ENCODE measurements at regions of chr3 and their contacts with region 1.

Region 1: GRCh38 chr3:128617557-128618397 is 32.8 kb downstream of the RPN1 start:
- DNase-seq: peak; percentile 99
- H3K4me3 ChIP-seq: peak overlapping the region; percentile 78 to 90 (median 84)
- H3K27ac ChIP-seq: peak overlapping the region; percentile 84 to 93 (median 90)
- H3K4me1 ChIP-seq: peaks cover 0 to 21% (median 18%) of the 10 kb centered on the region in 4 donors
- H3K27me3 ChIP-seq: no peaks in the 10 kb centered on the region
- CTCF ChIP-seq: peak; percentile 87 to 95 (median 92)
- EP300 ChIP-seq: peak in 1 of 4 donors; percentile 68
- POLR2A ChIP-seq: no peak

Region 2: GRCh38 chr3:128369864-128370642 is 247.7 kb before region 1 on chr3:
- intact Hi-C with region 1: no loop called
- DNase-seq: no peak
- H3K4me3 ChIP-seq: no peak overlapping the region
- H3K27ac ChIP-seq: no peak overlapping the region
- H3K4me1 ChIP-seq: peaks cover 0 to 17% (median 4%) of the 10 kb centered on the region in 4 donors
- H3K27me3 ChIP-seq: no peaks in the 10 kb centered on the region
- CTCF ChIP-seq: no peak
- EP300 ChIP-seq: no peak
- POLR2A ChIP-seq: no peak

Region 3: DNA sequence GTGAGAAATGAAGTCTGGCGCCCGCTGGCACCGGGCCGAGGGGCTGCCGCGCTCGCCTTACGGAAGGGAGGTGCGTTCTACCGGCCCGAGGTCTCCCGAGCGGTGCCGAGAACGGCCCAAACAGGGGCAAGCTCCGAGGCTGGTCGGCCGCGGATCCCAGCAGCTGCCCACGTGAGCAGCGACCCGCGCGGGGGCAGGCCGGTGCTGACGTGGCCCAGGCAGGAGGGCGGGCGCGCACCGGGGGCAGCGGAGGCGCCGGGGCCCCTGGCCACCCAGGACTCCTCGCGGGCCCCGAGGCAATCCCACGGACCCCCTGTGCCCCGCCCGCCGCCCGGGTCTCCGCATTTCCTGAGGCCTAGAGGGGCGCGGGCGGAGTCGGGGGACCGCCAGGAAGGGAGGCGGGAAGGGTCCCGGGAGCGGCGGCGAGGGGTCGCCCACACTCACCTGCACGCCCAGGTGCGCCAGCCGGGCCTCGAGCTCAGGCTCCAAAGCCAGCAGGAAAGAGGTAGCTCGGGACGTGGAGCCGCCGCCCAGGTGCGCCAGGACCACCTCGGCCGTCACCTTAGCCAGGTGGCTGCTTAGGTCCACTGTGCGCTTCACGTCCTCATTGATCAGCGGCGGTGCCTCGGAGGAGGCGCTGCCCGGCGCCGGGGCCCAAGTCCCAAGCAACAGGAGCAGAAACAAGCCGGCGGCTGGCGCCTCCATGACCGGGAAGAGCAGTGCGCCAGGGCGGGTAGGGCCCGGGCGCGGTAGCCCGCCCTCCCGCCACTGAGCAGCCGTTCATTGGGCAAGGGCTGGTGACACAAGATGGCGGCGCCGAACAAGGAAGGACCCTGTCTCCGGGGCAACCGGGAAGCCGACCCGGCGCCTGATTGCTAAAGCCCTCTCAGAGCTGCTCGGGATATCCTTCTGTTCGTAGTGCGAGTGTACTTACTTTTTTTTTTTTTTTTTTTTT is 32.6 kb after region 1 on chr3 and contains the start of gene RPN1:
- intact Hi-C with region 1: loop called (anchors 1 kb)
- DNase-seq: peak; percentile 99
- H3K4me3 ChIP-seq: peak within 1 kb of the TSS; percentile 94 to 100 (median 97)
- H3K27ac ChIP-seq: peak within 1 kb of the TSS; percentile 96 to 100 (median 100)
- H3K4me1 ChIP-seq: peaks cover 0 to 23% (median 17%) of the 10 kb centered on the region in 4 donors
- H3K27me3 ChIP-seq: no peaks in the 10 kb centered on the region
- CTCF ChIP-seq: no peak
- EP300 ChIP-seq: no peak
- POLR2A ChIP-seq: peak; percentile 69 to 72
- total RNA-seq, gene RPN1: 115 to 158 (median 143) TPM

Region 4: DNA sequence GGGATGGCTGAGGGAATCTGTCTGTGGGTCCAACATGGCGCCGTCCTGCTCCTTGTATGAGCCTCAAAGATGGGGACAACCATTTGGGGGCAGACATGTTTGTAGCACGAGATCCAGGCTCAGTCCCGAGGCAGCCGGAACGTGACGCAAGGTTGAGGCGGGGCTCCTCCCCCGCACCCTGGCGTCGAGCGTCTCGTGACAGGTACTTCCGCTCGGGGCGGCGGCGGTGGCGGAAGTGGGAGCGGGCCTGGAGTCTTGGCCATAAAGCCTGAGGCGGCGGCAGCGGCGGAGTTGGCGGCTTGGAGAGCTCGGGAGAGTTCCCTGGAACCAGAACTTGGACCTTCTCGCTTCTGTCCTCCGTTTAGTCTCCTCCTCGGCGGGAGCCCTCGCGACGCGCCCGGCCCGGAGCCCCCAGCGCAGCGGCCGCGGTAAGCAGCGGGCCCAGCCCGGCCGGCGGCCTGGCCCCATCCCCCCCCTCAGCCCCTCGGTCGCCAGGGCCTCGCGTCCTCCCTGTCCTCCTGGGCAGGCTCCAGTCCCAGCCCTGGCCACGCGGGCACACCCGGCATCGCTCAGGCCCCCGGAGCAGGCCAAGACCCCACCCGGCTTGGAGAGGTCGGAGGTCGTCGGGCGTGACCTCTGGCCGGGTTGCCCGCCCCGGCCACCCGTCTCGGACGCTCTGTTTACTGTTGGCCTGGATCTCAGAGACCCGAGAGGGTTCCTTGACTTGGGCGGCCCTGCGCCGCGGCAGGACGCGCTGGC is 108.3 kb after region 1 on chr3 and contains the start of gene RAB7A:
- intact Hi-C with region 1: loop called (anchors 5 kb)
- DNase-seq: peak; percentile 99
- H3K4me3 ChIP-seq: peak within 1 kb of the TSS; percentile 80 to 99 (median 94)
- H3K27ac ChIP-seq: peak within 1 kb of the TSS; percentile 93 to 99 (median 98)
- H3K4me1 ChIP-seq: peaks cover 0 to 43% (median 38%) of the 10 kb centered on the region in 4 donors
- H3K27me3 ChIP-seq: no peaks in the 10 kb centered on the region
- CTCF ChIP-seq: no peak
- EP300 ChIP-seq: peak; percentile 43 to 99 (median 81)
- POLR2A ChIP-seq: peak; percentile 87 to 95
- total RNA-seq, gene RAB7A: 73.6 to 100.0 (median 86.8) TPM

Region 5: DNA sequence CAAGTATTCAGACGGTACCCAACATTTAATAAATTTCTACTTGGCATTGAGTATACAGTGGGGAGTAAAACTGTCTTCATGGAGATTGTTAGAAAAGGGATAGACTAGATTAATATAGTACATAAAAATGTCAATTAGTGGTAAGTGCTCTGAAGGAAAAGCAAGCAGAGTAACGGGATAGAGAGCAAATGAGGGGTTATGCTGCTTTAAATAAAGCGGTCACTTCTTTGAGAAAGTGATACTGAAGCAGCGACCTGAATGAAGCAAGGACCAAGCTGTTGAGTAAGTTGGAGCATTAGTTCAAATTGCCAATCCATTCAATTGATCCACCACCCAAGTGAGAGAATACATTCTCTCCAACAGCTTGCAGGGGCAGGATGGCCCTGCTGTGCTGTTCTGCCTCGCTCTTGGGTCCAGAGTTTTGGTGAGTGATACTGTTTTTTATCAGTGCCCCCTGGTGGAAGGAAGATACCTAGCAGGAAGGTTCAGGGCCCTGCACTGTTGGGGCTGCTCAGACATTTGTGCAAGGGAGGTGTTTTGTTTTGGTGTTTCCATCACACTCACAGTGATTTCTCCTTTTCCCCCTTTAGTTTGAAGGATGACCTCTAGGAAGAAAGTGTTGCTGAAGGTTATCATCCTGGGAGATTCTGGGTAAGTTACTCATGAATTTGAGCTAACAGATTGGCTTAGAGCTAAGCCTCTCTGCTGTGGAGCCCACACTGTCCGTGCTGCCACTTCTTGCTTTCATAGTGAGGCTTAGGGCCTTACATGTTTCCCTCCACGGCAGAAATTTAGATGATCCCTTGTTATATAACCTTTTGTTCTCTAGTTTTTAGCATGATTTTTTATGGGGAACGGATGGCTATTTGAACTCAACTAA is 177.2 kb after region 1 on chr3:
- intact Hi-C with region 1: loop called (anchors 1 kb)
- DNase-seq: peak; percentile 71
- H3K4me3 ChIP-seq: no peak overlapping the region
- H3K27ac ChIP-seq: peak overlapping the region; percentile 29 to 63 (median 50)
- H3K4me1 ChIP-seq: peaks cover 0 to 29% (median 23%) of the 10 kb centered on the region in 4 donors
- H3K27me3 ChIP-seq: no peaks in the 10 kb centered on the region
- CTCF ChIP-seq: peak; percentile 59 to 86 (median 81)
- EP300 ChIP-seq: no peak
- POLR2A ChIP-seq: no peak

Region 6: DNA sequence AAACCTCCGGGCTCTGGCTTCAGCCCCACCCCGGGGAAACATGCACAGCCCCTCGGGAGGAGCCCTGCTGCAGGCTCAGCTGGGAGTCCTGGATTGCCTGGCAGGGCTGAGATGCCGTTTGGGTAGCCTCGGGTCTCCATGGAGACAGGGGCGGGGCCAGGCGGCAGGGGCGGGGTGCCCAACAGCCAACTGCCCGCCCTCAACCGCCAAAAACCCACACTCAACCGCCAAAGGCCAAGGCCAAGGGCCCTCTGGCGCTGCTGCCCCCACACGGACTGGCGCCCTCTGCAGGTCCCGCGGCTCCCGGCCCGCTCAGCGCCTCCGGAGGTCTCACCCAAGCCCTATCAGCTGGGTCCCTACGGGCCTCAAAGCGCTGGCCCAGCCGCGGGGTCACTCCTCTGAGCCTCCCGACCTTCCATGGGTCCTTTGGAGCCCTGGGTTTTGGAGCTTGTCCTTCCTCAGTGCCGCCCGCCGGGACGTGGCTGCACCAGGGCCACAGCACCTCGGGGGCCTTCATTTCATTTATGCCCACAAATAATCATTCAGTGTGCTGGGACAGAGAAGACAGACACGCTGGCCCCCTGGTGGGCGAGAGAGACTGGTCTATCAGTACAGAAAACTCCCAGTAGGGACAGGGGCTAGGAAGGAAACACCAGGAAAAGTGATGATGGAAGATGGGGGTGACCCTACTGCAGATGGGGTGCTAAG is 228.2 kb after region 1 on chr3:
- intact Hi-C with region 1: loop called (anchors 1 kb)
- DNase-seq: peak; percentile 90
- H3K4me3 ChIP-seq: peak overlapping the region; percentile 19 to 52 (median 45)
- H3K27ac ChIP-seq: peak overlapping the region; percentile 59 to 75 (median 70)
- H3K4me1 ChIP-seq: peaks cover 0 to 16% (median 14%) of the 10 kb centered on the region in 4 donors
- H3K27me3 ChIP-seq: no peaks in the 10 kb centered on the region
- CTCF ChIP-seq: peak; percentile 53 to 72 (median 60)
- EP300 ChIP-seq: no peak
- POLR2A ChIP-seq: no peak

Region 7: GRCh38 chr3:128879125-128879969 is 261.6 kb after region 1 on chr3 and contains the start of gene ACAD9:
- intact Hi-C with region 1: loop called (anchors 2 kb)
- DNase-seq: peak; percentile 99
- H3K4me3 ChIP-seq: peak within 1 kb of the TSS; percentile 62 to 81 (median 68)
- H3K27ac ChIP-seq: peak within 1 kb of the TSS; percentile 94 to 97 (median 96)
- H3K4me1 ChIP-seq: peaks cover 0 to 37% (median 29%) of the 10 kb centered on the region in 4 donors
- H3K27me3 ChIP-seq: no peaks in the 10 kb centered on the region
- CTCF ChIP-seq: no peak
- EP300 ChIP-seq: peak in 1 of 4 donors; percentile 86
- POLR2A ChIP-seq: peak; percentile 90 to 97
- total RNA-seq, gene ACAD9: 30.3 to 40.5 (median 34.4) TPM

Measured in sigmoid colon (tissue), 7 donors.